Cardiac septum (tissue), 1 donor: ENCODE measurements at regions of chr9 and their contacts with region 1.

Region 1: GRCh38 chr9:20622330-20623020 is at the start of gene MLLT3:
- DNase-seq: peak; percentile 97
- total RNA-seq, gene MLLT3: 13.3 TPM

Region 2: GRCh38 chr9:19934301-19934868 is 688.1 kb before region 1 on chr9:
- intact Hi-C with region 1: loop called (anchors 10 kb)
- DNase-seq: no peak

Region 3: DNA sequence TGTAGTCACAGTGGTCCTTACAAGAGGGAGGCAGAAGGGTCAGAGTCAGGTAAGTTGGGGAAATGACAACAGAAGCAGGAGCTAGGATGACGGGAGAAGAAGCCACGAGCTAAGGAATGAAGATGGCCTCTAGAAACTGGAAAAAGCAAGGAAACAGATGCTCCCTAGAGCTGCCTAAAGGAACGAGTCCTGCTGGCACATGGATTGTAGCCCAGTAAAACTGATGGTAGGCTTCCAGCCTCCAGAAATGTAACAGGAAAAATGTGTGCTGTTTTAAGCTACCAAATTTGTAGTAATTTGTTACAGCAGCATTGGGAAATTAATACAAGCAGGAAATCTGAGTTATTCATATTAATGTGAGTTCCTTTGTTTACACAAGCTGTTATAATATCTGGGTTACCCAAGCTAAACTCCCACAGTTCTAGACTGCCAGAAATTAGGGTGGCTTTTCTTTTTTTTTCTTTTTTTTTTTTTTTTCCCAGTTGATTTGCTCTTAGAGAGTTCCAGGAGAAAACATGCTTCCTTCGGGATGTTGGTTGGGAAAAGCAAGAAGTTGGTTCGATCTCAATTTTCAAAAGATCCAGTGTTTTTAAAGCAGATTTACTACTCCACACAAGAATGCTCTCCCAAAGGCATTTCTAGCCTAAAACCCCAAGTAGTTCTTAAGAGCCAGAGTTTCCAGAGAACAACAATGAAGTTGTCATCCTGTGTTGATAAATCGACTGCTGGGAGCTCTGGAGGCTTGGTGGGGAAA is 433.7 kb before region 1 on chr9:
- intact Hi-C with region 1: no loop called
- DNase-seq: no peak

Region 4: DNA sequence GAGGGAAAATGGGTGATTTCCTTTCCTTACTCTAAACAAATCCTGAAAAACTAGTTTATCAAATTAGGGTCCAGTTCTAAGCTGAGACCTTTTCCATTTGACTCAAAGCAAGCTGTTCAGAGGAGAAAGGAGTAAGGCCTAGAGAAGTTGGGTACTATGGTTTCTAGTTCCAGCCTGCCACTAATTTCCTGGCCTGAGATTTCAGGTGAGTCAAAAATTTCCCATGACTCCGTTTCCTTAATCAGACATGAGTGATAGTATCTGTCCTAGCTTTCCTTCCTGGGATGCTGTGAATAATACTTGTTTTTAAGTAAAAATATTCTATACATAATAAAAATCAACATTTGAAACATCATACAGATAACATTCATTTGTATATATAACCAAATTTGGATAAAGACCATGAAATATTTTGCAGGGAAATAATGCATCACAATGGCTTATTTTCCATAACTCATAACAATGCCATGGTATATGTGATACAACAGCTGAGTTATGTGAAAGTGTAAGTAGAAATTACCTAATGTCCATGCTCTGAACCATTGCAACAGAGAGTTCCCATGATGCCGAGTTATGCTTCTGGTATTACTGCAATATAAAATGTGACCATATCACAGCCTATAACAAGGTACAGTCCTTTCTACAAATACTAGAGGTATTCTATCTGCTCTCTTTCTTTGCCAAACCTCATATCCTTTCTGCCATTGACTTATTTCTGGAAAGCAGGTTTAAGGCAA is 142.9 kb before region 1 on chr9:
- intact Hi-C with region 1: loop called (anchors 5 kb)
- DNase-seq: no peak

Region 5: DNA sequence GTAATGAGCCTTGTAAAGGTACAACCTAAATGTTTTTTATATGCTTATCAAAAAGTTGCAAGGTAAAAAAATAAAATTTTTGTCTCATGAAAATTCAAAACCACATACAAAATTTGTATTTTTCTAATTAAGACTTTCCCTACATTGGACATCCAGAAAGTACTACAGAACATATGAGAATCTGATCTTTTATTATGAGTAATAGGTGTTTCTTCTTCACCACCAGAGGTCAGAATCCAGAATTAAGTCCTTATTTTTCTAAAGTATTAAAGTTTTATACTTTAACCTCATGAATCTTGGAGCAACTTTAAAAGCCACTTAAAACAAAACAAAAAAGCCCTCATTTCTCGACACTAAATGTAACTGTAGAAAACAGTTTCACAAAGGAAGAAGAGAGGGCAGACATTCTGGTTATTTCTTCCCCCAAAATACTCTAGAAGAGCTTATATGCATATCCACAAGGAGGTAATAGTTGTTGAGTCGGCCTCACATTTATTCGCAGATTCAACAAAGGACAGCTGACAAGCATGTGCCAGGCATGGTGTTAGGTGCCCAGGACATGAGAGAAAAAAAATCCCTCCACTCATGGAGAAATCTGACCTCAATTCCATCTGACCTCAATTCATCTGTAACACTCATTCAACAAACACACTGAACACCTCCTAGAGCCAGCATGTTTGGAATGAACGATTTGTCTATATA is 69.5 kb before region 1 on chr9:
- intact Hi-C with region 1: loop called (anchors 5 kb)
- DNase-seq: no peak

Region 6: DNA sequence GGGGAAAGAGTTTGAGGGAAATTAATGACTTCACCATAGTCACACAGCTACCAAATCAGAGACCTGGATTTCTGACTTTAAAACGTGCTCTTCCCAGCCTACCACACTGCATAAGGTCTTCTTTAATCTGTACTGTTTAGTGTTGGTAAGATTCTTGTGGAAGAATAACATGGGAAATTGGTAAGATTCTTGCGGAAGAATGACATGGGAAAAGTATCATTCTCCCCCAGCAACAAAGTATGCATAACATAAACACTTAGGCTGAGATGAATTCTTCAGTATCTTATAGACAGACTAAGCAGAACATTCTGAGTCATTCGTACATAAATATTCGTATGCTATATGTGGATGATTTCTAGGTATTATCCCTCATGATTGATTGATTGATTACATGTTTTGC is 232.0 kb after region 1 on chr9:
- intact Hi-C with region 1: no loop called
- DNase-seq: no peak

Region 7: GRCh38 chr9:20898885-20899554 is 276.5 kb after region 1 on chr9:
- intact Hi-C with region 1: no loop called
- DNase-seq: no peak

Region 8: DNA sequence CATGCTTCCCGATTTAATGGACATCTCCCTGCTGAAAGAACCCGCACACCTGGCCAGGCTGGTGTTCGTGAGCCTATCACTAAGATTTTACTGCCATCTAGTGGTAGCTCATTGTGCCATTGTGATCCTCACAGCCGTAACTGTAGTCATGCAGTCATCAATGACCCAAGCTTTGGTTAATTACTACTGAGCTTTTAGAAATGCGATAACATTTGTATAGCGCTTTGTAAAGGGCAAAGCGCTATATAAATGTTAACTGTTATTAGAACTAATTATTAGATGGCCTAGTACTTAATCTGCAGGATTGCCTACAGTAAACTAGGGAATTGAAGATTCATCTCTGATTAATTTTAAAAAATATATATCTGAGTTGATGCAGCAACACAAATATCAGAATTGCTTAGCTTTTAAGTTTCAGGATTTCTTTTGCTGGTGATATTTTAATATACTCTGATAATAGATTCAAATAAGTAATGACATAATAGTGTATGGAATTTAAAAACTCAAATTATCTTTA is 318.8 kb after region 1 on chr9:
- intact Hi-C with region 1: loop called (anchors 5 kb)
- DNase-seq: no peak